Endothelial cell of umbilical vein (primary cell): ENCODE measurements at regions of chr3 and their contacts with region 1.

Region 1: DNA sequence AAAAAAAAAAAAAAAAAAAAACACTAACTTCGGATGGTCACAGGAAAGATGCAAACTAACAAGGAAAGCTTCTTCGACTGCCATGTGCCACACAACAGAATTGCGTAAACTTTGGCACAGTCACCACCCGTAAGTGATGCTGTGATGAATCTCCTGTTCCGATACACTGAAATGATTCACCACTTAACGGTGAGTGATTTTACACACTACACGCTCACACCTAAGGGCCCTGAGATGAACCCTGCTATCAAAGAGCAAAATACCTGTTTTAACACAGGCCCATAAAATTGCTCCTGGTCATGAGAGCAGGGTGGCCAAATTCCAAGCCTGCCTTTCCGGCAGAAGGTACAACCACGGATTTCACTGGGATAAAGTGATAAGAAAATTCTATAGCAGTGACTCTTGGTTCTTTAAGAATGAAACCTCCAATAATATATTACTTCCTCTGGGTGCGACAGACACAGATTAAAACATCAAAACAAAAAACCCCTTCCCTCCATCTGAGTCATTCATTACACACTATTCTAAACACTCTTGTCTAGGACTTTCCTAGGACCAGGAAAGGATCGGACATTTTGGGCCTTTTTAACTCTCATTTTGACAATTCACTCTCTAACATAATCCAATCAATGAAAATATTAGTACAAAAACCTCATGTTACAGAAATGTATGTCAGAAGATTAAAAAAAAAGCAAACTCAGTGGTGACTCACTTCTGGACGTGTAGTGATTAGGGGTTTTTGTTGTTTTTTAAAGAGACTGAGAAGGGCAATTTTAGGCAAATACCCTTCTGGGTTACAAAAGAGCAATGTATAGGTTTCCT is 28.3 kb downstream of the LRIG1 start:
- DNase-seq: peak; percentile 94
- H3K4me3 ChIP-seq: peak overlapping the region in 1 of 3 experiments; percentile 0
- H3K27ac ChIP-seq: peak overlapping the region; percentile 92
- H3K4me1 ChIP-seq: peaks cover 54% of the 10 kb centered on the region
- H3K27me3 ChIP-seq: no peaks in the 10 kb centered on the region
- CTCF ChIP-seq: no peak
- POLR2A ChIP-seq: peak; percentile 30

Region 2: GRCh38 chr3:66428733-66429132 is 43.8 kb before region 1 on chr3:
- CTCF ChIA-PET with region 1: interaction called, 4 read pairs
- POLR2A ChIA-PET with region 1: no interaction called
- dilution Hi-C with region 1: no loop called
- intact Hi-C with region 1: loop called (anchors 1 kb)
- DNase-seq: peak; percentile 100
- H3K4me3 ChIP-seq: peak overlapping the region in 1 of 3 experiments; percentile 41
- H3K27ac ChIP-seq: peak overlapping the region; percentile 94
- H3K4me1 ChIP-seq: peaks cover 23% of the 10 kb centered on the region
- H3K27me3 ChIP-seq: no peaks in the 10 kb centered on the region
- CTCF ChIP-seq: no peak
- POLR2A ChIP-seq: peak; percentile 56

Region 3: GRCh38 chr3:66450390-66451022 is 22.0 kb before region 1 on chr3:
- CTCF ChIA-PET with region 1: interaction called, 12 read pairs
- POLR2A ChIA-PET with region 1: no interaction called
- dilution Hi-C with region 1: no loop called
- intact Hi-C with region 1: loop called (anchors 2 kb)
- DNase-seq: peak; percentile 91
- H3K4me3 ChIP-seq: no peak overlapping the region
- H3K27ac ChIP-seq: peak overlapping the region; percentile 18
- H3K4me1 ChIP-seq: peaks cover 11% of the 10 kb centered on the region
- H3K27me3 ChIP-seq: no peaks in the 10 kb centered on the region
- CTCF ChIP-seq: no peak
- POLR2A ChIP-seq: no peak

Region 4: DNA sequence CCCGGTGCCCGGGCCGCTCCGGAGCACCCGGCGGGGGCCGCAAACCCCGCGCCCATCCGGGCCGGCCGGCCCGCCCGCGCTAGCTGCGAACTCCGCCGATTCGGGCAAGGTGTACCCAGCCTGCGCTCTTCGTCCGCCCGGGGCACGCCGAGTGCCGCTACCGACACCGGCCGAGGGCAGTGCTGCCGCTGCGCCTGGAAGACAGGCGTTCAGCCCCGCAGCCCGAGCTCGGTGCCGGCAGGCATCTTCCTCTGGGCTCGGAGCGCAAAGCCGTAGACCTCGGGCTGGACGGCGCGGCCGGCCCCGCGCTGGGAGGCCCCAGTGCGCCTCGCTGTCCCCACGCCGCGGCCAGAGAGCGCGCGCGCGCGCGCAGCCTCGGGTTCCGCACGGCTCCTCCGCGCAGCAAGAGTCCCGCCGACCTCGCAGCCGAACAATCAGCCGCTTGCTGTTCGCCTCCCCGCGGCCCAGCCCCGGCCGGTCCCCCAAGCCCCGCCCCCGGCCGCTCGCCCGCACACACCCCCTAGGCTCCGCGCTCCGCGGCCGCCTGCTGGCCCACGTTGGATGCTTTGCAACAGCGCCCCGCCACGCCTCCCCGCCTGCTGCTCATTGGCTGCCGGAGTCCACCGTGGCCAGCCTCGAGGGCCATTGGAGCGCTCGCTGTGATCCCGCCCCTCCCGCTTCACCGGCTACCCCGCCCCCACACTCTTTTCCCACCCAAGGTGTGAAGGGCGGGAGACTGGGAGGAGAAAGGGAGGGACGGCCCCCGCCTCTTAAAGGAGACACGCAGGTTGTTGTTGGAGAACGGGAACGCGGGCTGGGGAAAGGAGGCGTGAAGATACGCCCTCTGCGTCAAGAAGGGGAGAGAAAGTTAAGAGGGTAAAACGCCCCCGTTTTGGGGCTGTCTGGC is 28.3 kb after region 1 on chr3 and contains the start of gene LRIG1:
- CTCF ChIA-PET with region 1: no interaction called
- POLR2A ChIA-PET with region 1: no interaction called
- dilution Hi-C with region 1: no loop called
- intact Hi-C with region 1: loop called (anchors 1 kb)
- DNase-seq: peak; percentile 99
- H3K4me3 ChIP-seq: peak within 1 kb of the TSS; percentile 70 to 93 (median 90)
- H3K27ac ChIP-seq: peak within 1 kb of the TSS; percentile 69
- H3K4me1 ChIP-seq: peaks cover 14% of the 10 kb centered on the region
- H3K27me3 ChIP-seq: peaks cover 13 to 18% of the 10 kb centered on the region in 2 experiments
- CTCF ChIP-seq: peak in 1 of 2 donors; percentile 48
- POLR2A ChIP-seq: peak; percentile 80
- total RNA-seq, gene LRIG1: 42.0 and 52.2 TPM in 2 replicates